Naive thymus-derived CD4-positive, alpha-beta T cell (primary cell): ENCODE measurements at regions of chrX and their contacts with region 1.

Region 1: DNA sequence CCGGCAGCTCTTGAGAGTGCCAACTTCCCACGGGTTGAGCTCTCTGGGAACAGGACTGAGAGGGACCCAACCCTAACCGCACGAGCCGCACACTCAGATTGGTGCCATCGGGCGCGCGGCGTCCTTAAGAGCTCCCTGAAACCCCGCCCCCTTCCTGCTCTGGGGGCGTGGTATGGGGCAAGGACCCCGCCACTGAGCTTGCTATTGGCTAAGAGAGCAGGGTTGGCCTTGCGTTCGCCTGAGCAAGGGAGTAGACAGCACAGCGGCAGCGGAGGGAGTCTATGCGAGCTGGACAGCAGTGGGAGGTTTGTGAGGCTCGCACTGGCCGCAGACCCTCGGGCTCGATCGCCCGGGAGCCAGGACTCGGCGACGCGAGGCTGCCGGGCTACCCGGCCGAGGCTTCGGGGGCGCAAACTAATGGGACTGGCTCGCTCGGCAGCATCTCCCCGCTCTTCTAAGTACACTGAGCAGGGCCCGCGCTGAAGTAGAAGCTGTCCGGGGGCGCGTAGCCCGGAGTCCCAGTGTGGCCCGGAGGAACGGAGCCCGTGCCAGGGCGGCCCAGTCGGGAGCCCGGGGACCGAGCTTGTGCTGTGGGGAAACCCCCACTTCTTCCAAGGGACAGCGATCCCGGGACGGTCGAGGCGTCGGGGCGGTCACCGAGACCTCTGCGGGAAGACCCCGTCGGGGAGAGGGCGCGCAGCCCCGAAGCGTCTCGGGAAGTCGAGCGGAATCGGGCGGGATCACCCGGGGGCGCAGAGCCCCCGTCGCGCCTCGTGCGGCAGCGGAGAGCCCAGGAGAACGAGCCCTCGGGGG is at the start of gene EFNB1:
- DNase-seq: peak; percentile 67 to 90 (median 84)
- ATAC-seq: peak; percentile 97
- H3K4me3 ChIP-seq: peak within 1 kb of the TSS; percentile 76
- H3K4me3 Mint-ChIP-seq: peak within 1 kb of the TSS; percentile 90 to 96 (median 94)
- H3K27ac ChIP-seq: peak within 1 kb of the TSS; percentile 69
- H3K27ac Mint-ChIP-seq: peak within 1 kb of the TSS; percentile 75 to 94 (median 83)
- H3K4me1 ChIP-seq: peaks cover 6 to 9% of the 10 kb centered on the region in 2 donors
- H3K4me1 Mint-ChIP-seq: peaks cover 7 to 24% (median 17%) of the 10 kb centered on the region in 7 donors
- H3K27me3 ChIP-seq: no peaks in the 10 kb centered on the region
- H3K27me3 Mint-ChIP-seq: peaks cover 0 to 15% (median 0%) of the 10 kb centered on the region in 5 donors
- total RNA-seq, gene EFNB1: 2.6 to 4.8 (median 4.1) TPM

Region 2: DNA sequence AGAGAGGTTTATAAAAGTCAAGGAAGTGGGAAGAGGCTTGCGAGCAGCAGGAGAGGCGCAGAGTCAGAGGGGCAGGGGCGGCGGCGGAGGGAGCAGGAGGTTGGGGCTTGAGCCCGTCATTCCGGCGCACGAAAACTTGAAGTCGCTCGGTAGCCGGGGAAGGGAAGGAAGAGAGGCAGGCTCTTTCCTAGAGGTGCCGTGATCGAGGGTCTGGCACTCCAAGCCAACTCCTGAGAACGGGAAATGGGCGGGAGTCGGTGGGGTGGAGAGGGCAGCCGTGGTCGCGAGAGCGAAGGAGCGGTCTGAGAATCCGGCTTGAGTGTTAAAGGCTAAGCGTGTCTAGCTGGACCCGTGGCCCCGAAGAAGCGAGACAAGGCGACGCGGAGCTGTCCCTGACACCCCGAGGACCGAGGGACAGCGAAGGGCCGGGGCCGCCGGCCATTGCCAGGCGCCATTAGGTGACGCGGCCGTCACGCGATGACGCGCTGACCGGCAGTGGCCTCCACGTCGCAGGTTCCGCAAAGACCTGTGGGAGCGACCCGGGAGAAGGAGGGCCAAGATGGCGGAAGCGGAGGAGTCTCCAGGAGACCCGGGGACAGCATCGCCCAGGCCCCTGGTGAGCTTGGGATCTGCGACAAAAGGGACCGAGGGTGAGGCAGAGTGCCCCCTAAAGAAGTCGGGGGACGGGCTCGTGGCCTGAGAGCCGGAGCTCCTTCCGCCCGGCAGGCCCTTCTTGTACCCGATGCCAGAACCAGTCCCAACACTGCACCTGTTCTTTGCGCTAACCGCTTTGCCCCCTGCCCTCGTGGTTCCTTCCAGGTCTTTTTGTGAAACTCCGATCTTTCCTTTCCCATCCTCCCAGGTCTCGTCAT is 330.2 kb before region 1 on chrX and contains the start of gene YIPF6:
- CTCF ChIA-PET with region 1: no interaction called
- POLR2A ChIA-PET with region 1: interaction called, 3 read pairs
- intact Hi-C with region 1: loop called (anchors 2 kb)
- DNase-seq: peak; percentile 25 to 69 (median 40)
- ATAC-seq: peak; percentile 93
- H3K4me3 ChIP-seq: peak within 1 kb of the TSS; percentile 82
- H3K4me3 Mint-ChIP-seq: peak within 1 kb of the TSS; percentile 90 to 99 (median 95)
- H3K27ac ChIP-seq: peak within 1 kb of the TSS; percentile 92
- H3K27ac Mint-ChIP-seq: peak within 1 kb of the TSS; percentile 94 to 99 (median 98)
- H3K4me1 ChIP-seq: no peaks in the 10 kb centered on the region
- H3K4me1 Mint-ChIP-seq: peaks cover 12 to 51% (median 40%) of the 10 kb centered on the region in 7 donors
- H3K27me3 ChIP-seq: no peaks in the 10 kb centered on the region
- H3K27me3 Mint-ChIP-seq: peaks cover 0 to 6% (median 0%) of the 10 kb centered on the region in 5 donors
- total RNA-seq, gene YIPF6: 8.0 to 17.0 (median 14.2) TPM

Region 3: DNA sequence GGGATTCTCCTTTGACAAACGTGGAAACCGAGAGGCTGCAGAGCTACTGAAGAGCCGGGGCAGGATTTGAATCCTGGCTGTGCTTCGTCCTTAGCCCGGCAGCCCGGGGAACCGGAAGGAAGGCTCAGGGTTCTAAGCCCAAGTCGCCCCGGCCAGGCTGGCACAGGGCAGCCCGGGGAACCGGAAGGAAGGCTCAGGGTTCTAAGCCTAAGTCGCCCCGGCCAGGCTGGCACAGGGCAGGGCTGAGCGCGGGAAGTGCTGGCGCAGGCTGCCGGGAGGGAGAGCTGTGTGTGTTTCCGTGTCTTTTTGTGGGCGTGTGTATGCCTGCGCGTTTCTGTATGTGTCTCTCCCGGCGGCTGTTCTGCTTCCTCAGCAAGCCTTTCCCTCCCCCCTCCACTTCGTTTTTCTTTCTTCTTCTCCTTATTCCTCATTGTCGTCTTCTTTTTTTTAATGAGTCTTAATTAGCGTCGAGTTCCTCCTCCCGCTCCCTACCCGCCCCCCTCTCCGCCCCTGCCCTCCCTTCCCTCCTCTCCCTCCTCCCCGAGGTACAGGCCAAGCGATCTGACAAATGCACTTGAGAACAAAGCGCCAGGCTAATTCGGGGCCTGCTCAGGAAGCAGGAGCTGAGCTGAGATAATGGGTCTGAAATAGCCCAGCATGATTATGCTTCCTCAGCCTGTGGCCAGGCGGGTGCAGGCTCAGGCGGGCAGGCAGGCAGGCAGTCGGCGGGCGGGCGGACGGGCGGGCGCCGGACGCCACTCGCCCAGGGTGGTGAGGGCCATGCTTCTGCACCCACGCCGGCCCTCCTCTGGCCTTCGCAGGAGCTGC is 65.8 kb after region 1 on chrX:
- CTCF ChIA-PET with region 1: no interaction called
- POLR2A ChIA-PET with region 1: no interaction called
- intact Hi-C with region 1: loop called in 1 of 2 experiments (anchors 2 kb)
- DNase-seq: peak in 5 of 9 donors; percentile 6 to 19 (median 8)
- ATAC-seq: peak; percentile 74
- H3K4me3 ChIP-seq: no peak overlapping the region
- H3K4me3 Mint-ChIP-seq: peak overlapping the region; percentile 35 to 86 (median 74)
- H3K27ac ChIP-seq: no peak overlapping the region
- H3K27ac Mint-ChIP-seq: peak overlapping the region in 6 of 9 donors; percentile 19 to 86 (median 66)
- H3K4me1 ChIP-seq: no peaks in the 10 kb centered on the region
- H3K4me1 Mint-ChIP-seq: peaks cover 0 to 17% (median 10%) of the 10 kb centered on the region in 7 donors
- H3K27me3 ChIP-seq: no peaks in the 10 kb centered on the region
- H3K27me3 Mint-ChIP-seq: no peaks in the 10 kb centered on the region

Region 4: DNA sequence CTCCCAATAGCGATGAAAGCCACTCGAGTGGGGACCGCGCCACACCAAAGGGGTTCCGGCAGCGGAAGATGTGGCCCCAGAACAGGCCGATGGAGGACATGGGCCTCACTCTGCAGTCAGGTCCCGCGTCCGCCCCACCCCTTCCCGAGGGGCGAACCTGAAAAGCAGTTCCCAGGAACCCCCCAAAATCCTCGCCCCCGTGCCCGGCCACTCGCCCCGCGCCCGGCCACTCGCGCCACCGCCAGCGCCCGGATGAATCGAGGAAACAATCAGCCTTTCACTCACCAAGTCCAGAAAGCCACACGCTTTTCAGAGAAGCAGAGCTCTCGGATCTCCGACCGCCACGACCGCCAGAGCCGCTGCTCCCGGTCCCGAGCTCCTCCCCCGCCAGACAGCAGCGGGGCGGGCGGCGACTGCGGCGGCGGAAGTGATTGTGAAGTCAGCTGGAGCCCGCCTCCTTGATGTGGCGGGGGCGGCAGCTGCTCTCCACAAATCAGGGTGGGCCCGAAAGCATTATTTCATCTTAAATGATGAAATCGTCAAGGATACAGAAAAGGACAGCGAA is 336.2 kb after region 1 on chrX and contains the start of gene PJA1:
- CTCF ChIA-PET with region 1: interaction called, 7 read pairs
- POLR2A ChIA-PET with region 1: interaction called, 3 read pairs
- intact Hi-C with region 1: loop called (anchors 1 kb)
- DNase-seq: peak; percentile 41 to 74 (median 70)
- ATAC-seq: peak; percentile 86
- H3K4me3 ChIP-seq: peak within 1 kb of the TSS; percentile 68
- H3K4me3 Mint-ChIP-seq: peak within 1 kb of the TSS; percentile 69 to 90 (median 85)
- H3K27ac ChIP-seq: peak within 1 kb of the TSS; percentile 81
- H3K27ac Mint-ChIP-seq: peak within 1 kb of the TSS; percentile 80 to 94 (median 92)
- H3K4me1 ChIP-seq: peaks cover 13 to 15% of the 10 kb centered on the region in 2 donors
- H3K4me1 Mint-ChIP-seq: peaks cover 20 to 37% (median 29%) of the 10 kb centered on the region in 7 donors
- H3K27me3 ChIP-seq: no peaks in the 10 kb centered on the region
- H3K27me3 Mint-ChIP-seq: peaks cover 0 to 12% (median 0%) of the 10 kb centered on the region in 5 donors
- total RNA-seq, gene PJA1: 14.4 to 27.0 (median 22.5) TPM

Region 5: GRCh38 chrX:69362856-69363255 is 533.9 kb after region 1 on chrX:
- CTCF ChIA-PET with region 1: no interaction called
- POLR2A ChIA-PET with region 1: no interaction called
- intact Hi-C with region 1: no loop called
- DNase-seq: no peak
- ATAC-seq: no peak
- H3K4me3 ChIP-seq: no peak overlapping the region
- H3K4me3 Mint-ChIP-seq: no peak overlapping the region
- H3K27ac ChIP-seq: no peak overlapping the region
- H3K27ac Mint-ChIP-seq: peak overlapping the region in 1 of 9 donors; percentile 43
- H3K4me1 ChIP-seq: no peaks in the 10 kb centered on the region
- H3K4me1 Mint-ChIP-seq: no peaks in the 10 kb centered on the region
- H3K27me3 ChIP-seq: no peaks in the 10 kb centered on the region
- H3K27me3 Mint-ChIP-seq: no peaks in the 10 kb centered on the region

Region 6: GRCh38 chrX:69387567-69388487 is 558.9 kb after region 1 on chrX:
- CTCF ChIA-PET with region 1: no interaction called
- POLR2A ChIA-PET with region 1: no interaction called
- intact Hi-C with region 1: loop called in 1 of 2 experiments (anchors 2 kb)
- DNase-seq: peak in 7 of 9 donors; percentile 0 to 27 (median 11)
- ATAC-seq: peak; percentile 45
- H3K4me3 ChIP-seq: no peak overlapping the region
- H3K4me3 Mint-ChIP-seq: no peak overlapping the region
- H3K27ac ChIP-seq: no peak overlapping the region
- H3K27ac Mint-ChIP-seq: no peak overlapping the region
- H3K4me1 ChIP-seq: no peaks in the 10 kb centered on the region
- H3K4me1 Mint-ChIP-seq: peaks cover 0 to 4% (median 0%) of the 10 kb centered on the region in 7 donors
- H3K27me3 ChIP-seq: no peaks in the 10 kb centered on the region
- H3K27me3 Mint-ChIP-seq: peaks cover 0 to 20% (median 4%) of the 10 kb centered on the region in 5 donors

Region 7: GRCh38 chrX:70454441-70455365 is 1625.8 kb after region 1 on chrX:
- CTCF ChIA-PET with region 1: no interaction called
- POLR2A ChIA-PET with region 1: no interaction called
- intact Hi-C with region 1: loop called in 1 of 2 experiments (anchors 10 kb)
- DNase-seq: peak in 8 of 9 donors; percentile 39 to 72 (median 52)
- ATAC-seq: peak; percentile 80
- H3K4me3 ChIP-seq: peak overlapping the region; percentile 57
- H3K4me3 Mint-ChIP-seq: peak overlapping the region; percentile 66 to 93 (median 86)
- H3K27ac ChIP-seq: peak overlapping the region; percentile 60
- H3K27ac Mint-ChIP-seq: peak overlapping the region; percentile 40 to 95 (median 79)
- H3K4me1 ChIP-seq: peaks cover 8 to 11% of the 10 kb centered on the region in 2 donors
- H3K4me1 Mint-ChIP-seq: peaks cover 12 to 45% (median 32%) of the 10 kb centered on the region in 7 donors
- H3K27me3 ChIP-seq: no peaks in the 10 kb centered on the region
- H3K27me3 Mint-ChIP-seq: no peaks in the 10 kb centered on the region